ENCODE measurements at regions of chr3 and their contacts with region 1.

Region 1: GRCh38 chr3:178966299-178967176 is 105.1 kb downstream of the ZMAT3 start:
- DNase-seq: no peak
- H3K4me3 ChIP-seq: peak overlapping the region in 1 of 2 donors; percentile 8
- H3K27ac ChIP-seq: no peak overlapping the region
- H3K4me1 ChIP-seq: no peaks in the 10 kb centered on the region
- H3K27me3 ChIP-seq: no peaks in the 10 kb centered on the region
- CTCF ChIP-seq: peak; percentile 26 to 64 (median 58)

Region 2: DNA sequence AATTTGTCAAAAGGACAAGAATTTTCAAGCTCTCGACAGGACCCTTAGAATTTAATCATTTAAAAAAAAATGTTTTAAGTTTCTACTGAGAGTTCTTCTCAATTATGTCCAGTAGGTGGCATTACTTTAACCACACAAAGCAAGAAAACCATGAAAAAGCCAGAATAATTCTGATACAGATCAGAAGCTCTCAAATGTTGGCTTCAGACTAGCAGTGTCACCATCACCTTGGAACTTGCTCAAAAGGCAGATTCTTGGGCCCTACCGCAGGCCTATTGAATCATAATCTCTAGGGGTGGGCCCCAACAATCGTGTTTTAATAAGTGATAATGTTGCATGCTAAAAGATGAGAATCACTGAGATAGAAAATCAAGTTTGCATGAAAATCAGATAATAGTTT is 529.8 kb before region 1 on chr3:
- intact Hi-C with region 1: loop called (anchors 2 kb)
- DNase-seq: no peak
- H3K4me3 ChIP-seq: no peak overlapping the region
- H3K27ac ChIP-seq: no peak overlapping the region
- H3K4me1 ChIP-seq: no peaks in the 10 kb centered on the region
- H3K27me3 ChIP-seq: no peaks in the 10 kb centered on the region
- CTCF ChIP-seq: peak; percentile 22 to 59 (median 45)

Region 3: GRCh38 chr3:179355996-179356395 is 389.5 kb after region 1 on chr3:
- intact Hi-C with region 1: no loop called
- DNase-seq: no peak
- H3K4me3 ChIP-seq: no peak overlapping the region
- H3K27ac ChIP-seq: no peak overlapping the region
- H3K4me1 ChIP-seq: no peaks in the 10 kb centered on the region
- H3K27me3 ChIP-seq: no peaks in the 10 kb centered on the region
- CTCF ChIP-seq: no peak

Measured in ascending aorta (tissue), 2 donors.